GM12878 (cell line): ENCODE measurements at regions of chr1 and their contacts with region 1.

Region 1: GRCh38 chr1:163174524-163175437 is 27.9 kb downstream of the RGS5 start:
- DNase-seq: no peak
- ATAC-seq: peak; percentile 76
- H3K4me3 ChIP-seq: no peak overlapping the region
- H3K27ac ChIP-seq: no peak overlapping the region
- H3K4me1 ChIP-seq: no peaks in the 10 kb centered on the region
- H3K27me3 ChIP-seq: no peaks in the 10 kb centered on the region
- CTCF ChIP-seq: peak; percentile 73 to 82 (median 75)
- EP300 ChIP-seq: no peak
- POLR2A ChIP-seq: no peak
- RAD21 ChIP-seq: peak; percentile 75

Region 2: GRCh38 chr1:162847839-162848453 is 326.8 kb before region 1 on chr1:
- CTCF ChIA-PET with region 1: interaction called, 23 read pairs
- POLR2A ChIA-PET with region 1: no interaction called
- RAD21 ChIA-PET with region 1: no interaction called
- SMC1A ChIA-PET with region 1: interaction called, 5 read pairs
- in situ Hi-C with region 1: loop called (anchors 10 kb)
- intact Hi-C with region 1: loop called (anchors 1 kb)
- DNase-seq: no peak
- ATAC-seq: peak; percentile 79
- H3K4me3 ChIP-seq: no peak overlapping the region
- H3K27ac ChIP-seq: no peak overlapping the region
- H3K4me1 ChIP-seq: no peaks in the 10 kb centered on the region
- H3K27me3 ChIP-seq: no peaks in the 10 kb centered on the region; a peak in 1 of 4 replicates
- CTCF ChIP-seq: peak; percentile 81 to 83 (median 82)
- EP300 ChIP-seq: no peak
- POLR2A ChIP-seq: no peak
- RAD21 ChIP-seq: peak; percentile 83

Region 3: GRCh38 chr1:162854245-162854882 is 320.4 kb before region 1 on chr1:
- CTCF ChIA-PET with region 1: interaction called, 23 read pairs
- POLR2A ChIA-PET with region 1: no interaction called
- RAD21 ChIA-PET with region 1: interaction called, 3 read pairs
- SMC1A ChIA-PET with region 1: interaction called, 7 read pairs
- in situ Hi-C with region 1: loop called (anchors 10 kb)
- intact Hi-C with region 1: no loop called
- DNase-seq: no peak
- ATAC-seq: peak; percentile 94
- H3K4me3 ChIP-seq: no peak overlapping the region
- H3K27ac ChIP-seq: no peak overlapping the region
- H3K4me1 ChIP-seq: no peaks in the 10 kb centered on the region
- H3K27me3 ChIP-seq: 0 out of 4 replicates have a peak, but pooled peaks cover 0 to 1% of the 10 kb centered on the region in 2 experiments
- CTCF ChIP-seq: peak; percentile 70 to 81 (median 72)
- EP300 ChIP-seq: no peak
- POLR2A ChIP-seq: no peak
- RAD21 ChIP-seq: peak; percentile 67

Region 4: DNA sequence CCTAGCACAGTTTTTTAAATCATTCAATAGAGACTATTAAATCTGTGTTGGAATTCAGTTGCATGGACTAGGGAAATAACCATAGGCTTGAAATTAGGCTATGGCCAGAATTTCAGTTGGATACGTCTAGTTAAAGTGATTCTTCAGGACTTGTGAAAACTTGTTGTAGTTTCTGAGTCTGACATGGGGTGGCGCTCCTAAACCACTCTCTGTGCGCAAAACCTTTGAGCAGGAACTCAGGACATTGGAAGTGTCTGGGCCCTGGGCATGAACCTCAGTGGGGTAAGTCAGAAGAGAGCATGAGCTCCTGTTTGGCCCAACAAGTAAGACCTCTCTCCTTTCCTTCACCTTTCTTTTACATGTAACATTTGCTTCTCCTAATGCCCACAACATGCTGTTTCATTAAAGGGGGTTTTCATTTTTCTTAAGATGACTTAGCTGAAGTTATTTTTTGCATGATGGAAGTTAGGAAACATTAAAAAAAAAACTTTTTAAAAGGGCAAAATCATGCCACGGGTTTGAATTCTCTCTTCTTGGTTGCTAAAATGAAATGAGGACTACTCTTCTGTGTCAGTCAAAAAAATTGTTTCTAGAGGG is 296.7 kb before region 1 on chr1:
- CTCF ChIA-PET with region 1: interaction called, 16 read pairs
- POLR2A ChIA-PET with region 1: no interaction called
- RAD21 ChIA-PET with region 1: interaction called, 3 read pairs
- SMC1A ChIA-PET with region 1: interaction called, 4 read pairs
- in situ Hi-C with region 1: no loop called
- intact Hi-C with region 1: loop called (anchors 1 kb)
- DNase-seq: no peak
- ATAC-seq: peak; percentile 60
- H3K4me3 ChIP-seq: no peak overlapping the region
- H3K27ac ChIP-seq: no peak overlapping the region
- H3K4me1 ChIP-seq: no peaks in the 10 kb centered on the region
- H3K27me3 ChIP-seq: peaks cover 0 to 2% of the 10 kb centered on the region in 2 experiments; a peak in 2 of 4 replicates
- CTCF ChIP-seq: peak; percentile 54 to 59 (median 58); a peak in 5 of 6 replicates
- EP300 ChIP-seq: no peak
- POLR2A ChIP-seq: no peak
- RAD21 ChIP-seq: peak; percentile 70

Region 5: GRCh38 chr1:163071405-163072255 is 103.2 kb before region 1 on chr1:
- CTCF ChIA-PET with region 1: interaction called, 7 read pairs
- POLR2A ChIA-PET with region 1: no interaction called
- RAD21 ChIA-PET with region 1: no interaction called
- SMC1A ChIA-PET with region 1: interaction called, 3 read pairs
- in situ Hi-C with region 1: no loop called
- intact Hi-C with region 1: loop called (anchors 2 kb)
- DNase-seq: no peak
- ATAC-seq: peak; percentile 85
- H3K4me3 ChIP-seq: no peak overlapping the region
- H3K27ac ChIP-seq: no peak overlapping the region
- H3K4me1 ChIP-seq: no peaks in the 10 kb centered on the region
- H3K27me3 ChIP-seq: peaks cover 0 to 8% of the 10 kb centered on the region in 2 experiments; a peak in 1 of 4 replicates
- CTCF ChIP-seq: peak; percentile 66 to 77 (median 74)
- EP300 ChIP-seq: no peak
- POLR2A ChIP-seq: no peak
- RAD21 ChIP-seq: peak; percentile 42

Region 6: DNA sequence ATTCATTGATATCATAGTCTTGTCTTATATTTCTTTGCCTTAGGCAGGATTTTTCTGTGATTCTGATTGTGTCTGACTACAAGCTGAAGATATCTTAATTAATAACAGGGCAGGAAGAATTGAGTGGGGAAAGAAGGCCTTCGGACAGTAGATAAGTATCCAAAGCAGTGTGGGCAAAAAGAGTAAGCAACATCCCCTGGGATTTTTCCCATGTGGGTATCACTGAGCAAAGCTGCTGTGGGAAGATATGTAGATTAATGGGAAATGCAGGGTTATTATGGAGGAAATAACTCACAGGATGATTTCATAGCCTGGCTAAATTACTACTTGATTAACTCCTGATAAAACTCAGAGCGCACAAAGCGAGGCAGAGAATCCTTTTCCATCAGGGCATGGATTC is 27.8 kb before region 1 on chr1:
- CTCF ChIA-PET with region 1: no interaction called
- POLR2A ChIA-PET with region 1: no interaction called
- RAD21 ChIA-PET with region 1: no interaction called
- SMC1A ChIA-PET with region 1: no interaction called
- in situ Hi-C with region 1: no loop called
- intact Hi-C with region 1: no loop called
- DNase-seq: no peak
- ATAC-seq: no peak
- H3K4me3 ChIP-seq: no peak overlapping the region
- H3K27ac ChIP-seq: no peak overlapping the region
- H3K4me1 ChIP-seq: no peaks in the 10 kb centered on the region
- H3K27me3 ChIP-seq: no peaks in the 10 kb centered on the region
- CTCF ChIP-seq: no peak
- EP300 ChIP-seq: no peak
- POLR2A ChIP-seq: no peak
- RAD21 ChIP-seq: no peak

Region 7: DNA sequence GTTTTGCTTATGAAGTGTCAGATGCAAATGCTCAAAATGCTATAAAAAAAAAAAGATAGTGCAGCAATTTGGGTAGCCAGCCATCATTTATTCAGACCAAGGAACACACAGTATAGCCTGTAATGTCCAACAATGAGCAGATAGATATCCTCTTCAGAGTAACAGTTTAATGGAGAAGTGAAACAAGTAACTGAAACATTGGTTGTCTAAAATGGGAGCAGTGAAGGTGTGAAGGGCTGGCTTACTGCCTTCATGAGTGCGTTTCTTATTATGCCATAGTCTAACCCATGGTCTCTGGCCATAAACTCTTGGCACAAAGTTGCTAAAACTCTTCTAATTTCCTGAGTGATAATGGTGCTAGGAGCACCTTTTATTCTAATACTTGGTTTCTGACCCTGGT is 16.5 kb after region 1 on chr1:
- CTCF ChIA-PET with region 1: interaction called, 15 read pairs
- POLR2A ChIA-PET with region 1: no interaction called
- RAD21 ChIA-PET with region 1: no interaction called
- SMC1A ChIA-PET with region 1: interaction called, 3 read pairs
- in situ Hi-C with region 1: no loop called
- intact Hi-C with region 1: no loop called
- DNase-seq: peak; percentile 9
- ATAC-seq: peak; percentile 77
- H3K4me3 ChIP-seq: no peak overlapping the region
- H3K27ac ChIP-seq: no peak overlapping the region
- H3K4me1 ChIP-seq: no peaks in the 10 kb centered on the region
- H3K27me3 ChIP-seq: no peaks in the 10 kb centered on the region
- CTCF ChIP-seq: no peak
- EP300 ChIP-seq: no peak
- POLR2A ChIP-seq: no peak
- RAD21 ChIP-seq: no peak